Ascending aorta (tissue), 2 donors: ENCODE measurements at regions of chr18 and their contacts with region 1.

Region 1: GRCh38 chr18:46173393-46174341 is 69.5 kb downstream of the HAUS1 start:
- DNase-seq: peak; percentile 67 to 95
- H3K4me3 ChIP-seq: peak overlapping the region; percentile 98
- H3K27ac ChIP-seq: peak overlapping the region; percentile 90 to 91
- H3K4me1 ChIP-seq: peaks cover 3 to 14% of the 10 kb centered on the region in 2 donors
- H3K27me3 ChIP-seq: no peaks in the 10 kb centered on the region
- CTCF ChIP-seq: peak; percentile 57 to 74 (median 65)

Region 2: DNA sequence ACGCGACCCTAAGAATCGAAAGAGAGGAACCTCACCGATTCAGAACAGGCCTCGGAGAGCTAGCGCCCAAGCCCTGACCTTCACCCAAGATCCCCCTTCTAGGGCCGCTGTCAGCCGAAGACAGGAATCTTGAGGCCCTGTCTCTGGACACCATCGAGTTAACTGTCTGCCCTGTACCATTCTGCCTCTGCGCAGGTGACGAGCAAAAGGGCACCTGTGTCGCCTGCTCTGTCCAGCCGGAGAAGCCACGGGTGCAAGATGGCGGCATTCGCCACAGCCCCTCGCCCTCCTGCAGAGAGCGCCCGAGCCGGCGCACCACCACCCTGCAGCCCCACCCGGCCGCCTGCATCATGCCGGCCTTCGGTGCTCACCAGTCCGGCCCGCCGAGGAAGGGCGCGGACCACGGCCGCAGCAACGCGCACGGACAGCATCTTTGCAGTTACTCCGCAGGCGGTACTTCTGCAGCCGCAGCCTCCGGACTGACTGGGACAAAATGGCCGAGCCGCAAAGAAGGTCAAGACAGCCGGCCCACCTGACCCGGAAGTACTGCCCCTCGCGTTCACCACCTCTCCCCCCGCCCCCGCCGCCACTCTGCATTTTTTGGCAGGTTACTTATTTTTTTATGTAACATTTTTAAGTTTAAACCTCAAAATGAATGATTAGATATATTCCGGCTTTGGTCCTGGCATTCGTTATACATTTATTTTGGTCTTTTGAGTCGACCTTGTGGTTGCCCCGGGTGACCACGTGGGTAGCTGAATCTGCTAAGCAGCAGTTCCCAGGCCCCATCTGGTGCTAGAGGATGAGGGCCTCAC is 75.7 kb before region 1 on chr18 and contains the start of gene ATP5F1A:
- intact Hi-C with region 1: loop called (anchors 5 kb)
- DNase-seq: peak; percentile 64 to 88
- H3K4me3 ChIP-seq: peak within 1 kb of the TSS; percentile 84 to 91
- H3K27ac ChIP-seq: peak within 1 kb of the TSS; percentile 72 to 82
- H3K4me1 ChIP-seq: peaks cover 3 to 21% of the 10 kb centered on the region in 2 donors
- H3K27me3 ChIP-seq: no peaks in the 10 kb centered on the region
- CTCF ChIP-seq: no peak
- total RNA-seq, gene ATP5F1A: 273 TPM

Region 3: GRCh38 chr18:46281185-46282176 is 107.8 kb after region 1 on chr18:
- intact Hi-C with region 1: loop called (anchors 10 kb)
- DNase-seq: no peak
- H3K4me3 ChIP-seq: no peak overlapping the region
- H3K27ac ChIP-seq: no peak overlapping the region
- H3K4me1 ChIP-seq: no peaks in the 10 kb centered on the region
- H3K27me3 ChIP-seq: no peaks in the 10 kb centered on the region
- CTCF ChIP-seq: peak; percentile 65 to 90 (median 77)

Region 4: DNA sequence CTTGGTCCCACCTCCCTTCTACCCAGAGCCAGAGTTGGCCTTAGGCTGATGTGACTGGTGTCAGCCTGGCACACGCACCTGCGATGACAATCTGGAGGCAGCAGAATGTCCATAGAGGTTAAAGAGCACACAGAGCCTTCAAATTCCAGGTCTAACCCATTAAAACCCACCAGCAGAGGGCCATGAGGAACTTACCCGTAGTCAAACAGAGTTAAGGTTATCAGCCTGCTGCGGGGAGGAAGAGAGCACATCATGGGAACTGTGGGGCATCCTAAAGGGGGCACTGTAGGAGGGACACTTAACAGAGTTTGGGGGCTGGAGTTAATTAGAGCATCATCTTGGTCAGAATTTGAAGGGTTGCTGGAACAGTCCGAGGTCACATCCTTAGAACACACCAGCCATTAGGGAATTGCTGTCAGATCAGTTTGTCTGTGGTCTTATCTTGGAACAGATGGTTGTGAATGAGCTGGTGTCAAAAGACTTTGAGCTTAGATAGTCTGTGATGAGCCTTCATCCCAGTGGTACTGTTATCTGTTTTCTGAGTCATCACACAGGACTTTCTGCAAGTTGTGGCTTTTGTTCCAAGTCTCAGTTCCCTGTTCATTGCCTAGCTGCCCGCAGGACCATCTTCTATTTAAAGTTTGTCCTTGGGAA is 234.8 kb after region 1 on chr18:
- intact Hi-C with region 1: loop called (anchors 10 kb)
- DNase-seq: no peak
- H3K4me3 ChIP-seq: no peak overlapping the region
- H3K27ac ChIP-seq: peak overlapping the region; percentile 50 to 81
- H3K4me1 ChIP-seq: peaks cover 9 to 23% of the 10 kb centered on the region in 2 donors
- H3K27me3 ChIP-seq: no peaks in the 10 kb centered on the region
- CTCF ChIP-seq: no peak

Region 5: DNA sequence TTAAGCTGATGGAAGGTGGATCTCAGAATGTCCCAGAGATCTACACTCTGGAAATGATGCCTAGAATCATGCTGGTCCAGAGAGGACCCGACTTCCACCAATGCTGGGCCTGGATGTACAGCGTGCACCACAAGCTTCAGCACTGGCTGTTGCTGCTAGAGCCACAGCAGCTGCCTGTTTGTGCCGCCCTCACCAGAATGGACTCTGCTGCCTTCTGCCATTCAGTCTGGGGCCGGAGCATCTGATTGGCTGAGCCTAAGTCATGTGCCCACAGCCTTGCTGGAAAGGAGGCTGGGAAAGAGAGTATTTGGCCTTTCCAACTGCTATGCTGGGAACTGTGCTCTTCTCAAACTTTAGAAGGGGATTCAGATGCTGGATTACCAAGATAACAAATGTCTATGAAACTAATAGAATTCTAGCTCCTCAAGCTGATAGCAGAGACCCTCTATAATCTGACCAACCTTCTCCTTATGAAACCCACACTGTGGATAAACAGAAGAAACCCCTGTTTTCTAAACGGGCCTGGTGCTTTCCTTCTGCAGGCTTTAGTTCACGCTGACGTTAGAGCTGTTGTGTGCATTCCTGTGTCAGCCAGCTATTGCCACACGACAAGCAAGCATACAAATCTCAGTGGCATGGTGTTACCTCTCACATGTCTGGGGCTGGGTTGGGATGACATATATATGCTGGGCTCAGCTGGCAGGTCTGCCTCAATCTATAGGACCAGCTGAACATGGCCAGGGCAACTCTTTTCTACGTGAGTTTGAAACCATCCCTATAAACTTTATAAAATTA is 487.5 kb after region 1 on chr18:
- intact Hi-C with region 1: loop called (anchors 1 kb)
- DNase-seq: no peak
- H3K4me3 ChIP-seq: no peak overlapping the region
- H3K27ac ChIP-seq: no peak overlapping the region
- H3K4me1 ChIP-seq: no peaks in the 10 kb centered on the region
- H3K27me3 ChIP-seq: no peaks in the 10 kb centered on the region
- CTCF ChIP-seq: no peak